ENCODE measurements at regions of chr12 and their contacts with region 1.

Region 1: GRCh38 chr12:110280779-110281548 is at the start of gene ATP2A2:
- DNase-seq: peak; percentile 75 to 97 (median 90)
- ATAC-seq: peak; percentile 89
- H3K4me3 ChIP-seq: peak within 1 kb of the TSS; percentile 60 to 82
- H3K4me3 Mint-ChIP-seq: peak within 1 kb of the TSS; percentile 91
- H3K27ac ChIP-seq: peak within 1 kb of the TSS; percentile 70 to 77
- H3K27ac Mint-ChIP-seq: peak within 1 kb of the TSS; percentile 94
- H3K4me1 ChIP-seq: peaks cover 35% of the 10 kb centered on the region
- H3K4me1 Mint-ChIP-seq: peaks cover 46% of the 10 kb centered on the region
- H3K27me3 ChIP-seq: no peaks in the 10 kb centered on the region
- H3K27me3 Mint-ChIP-seq: no peaks in the 10 kb centered on the region
- CTCF ChIP-seq: no peak
- total RNA-seq, gene ATP2A2: 100 to 105 TPM

Region 2: GRCh38 chr12:109573029-109573913 is 707.7 kb before region 1 on chr12 and contains the starts of genes MMAB and MVK:
- CTCF ChIA-PET with region 1: no interaction called
- POLR2A ChIA-PET with region 1: no interaction called
- intact Hi-C with region 1: loop called (anchors 2 to 5 kb)
- DNase-seq: peak; percentile 96 to 99 (median 98)
- ATAC-seq: peak; percentile 92
- H3K4me3 ChIP-seq: peak within 1 kb of the TSS; percentile 73 to 82
- H3K4me3 Mint-ChIP-seq: peak within 1 kb of the TSS; percentile 95
- H3K27ac ChIP-seq: peak within 1 kb of the TSS; percentile 95
- H3K27ac Mint-ChIP-seq: peak within 1 kb of the TSS; percentile 96
- H3K4me1 ChIP-seq: peaks cover 16% of the 10 kb centered on the region
- H3K4me1 Mint-ChIP-seq: peaks cover 35% of the 10 kb centered on the region
- H3K27me3 ChIP-seq: no peaks in the 10 kb centered on the region
- H3K27me3 Mint-ChIP-seq: no peaks in the 10 kb centered on the region
- CTCF ChIP-seq: no peak
- total RNA-seq, gene MMAB: 10.2 to 11.7 TPM
- total RNA-seq, gene MVK: 11.5 to 13.9 TPM

Region 3: GRCh38 chr12:110124184-110124995 is 156.6 kb before region 1 on chr12 and contains the start of gene IFT81:
- CTCF ChIA-PET with region 1: no interaction called
- POLR2A ChIA-PET with region 1: interaction called, 8 read pairs
- intact Hi-C with region 1: loop called (anchors 1 kb)
- DNase-seq: peak; percentile 94 to 99 (median 96)
- ATAC-seq: peak; percentile 95
- H3K4me3 ChIP-seq: peak within 1 kb of the TSS; percentile 69 to 96
- H3K4me3 Mint-ChIP-seq: peak within 1 kb of the TSS; percentile 91
- H3K27ac ChIP-seq: peak within 1 kb of the TSS; percentile 60 to 73
- H3K27ac Mint-ChIP-seq: peak within 1 kb of the TSS; percentile 83
- H3K4me1 ChIP-seq: peaks cover 10% of the 10 kb centered on the region
- H3K4me1 Mint-ChIP-seq: peaks cover 8% of the 10 kb centered on the region
- H3K27me3 ChIP-seq: no peaks in the 10 kb centered on the region
- H3K27me3 Mint-ChIP-seq: peaks cover 3% of the 10 kb centered on the region
- CTCF ChIP-seq: no peak
- total RNA-seq, gene IFT81: 0.25 to 0.43 TPM

Region 4: DNA sequence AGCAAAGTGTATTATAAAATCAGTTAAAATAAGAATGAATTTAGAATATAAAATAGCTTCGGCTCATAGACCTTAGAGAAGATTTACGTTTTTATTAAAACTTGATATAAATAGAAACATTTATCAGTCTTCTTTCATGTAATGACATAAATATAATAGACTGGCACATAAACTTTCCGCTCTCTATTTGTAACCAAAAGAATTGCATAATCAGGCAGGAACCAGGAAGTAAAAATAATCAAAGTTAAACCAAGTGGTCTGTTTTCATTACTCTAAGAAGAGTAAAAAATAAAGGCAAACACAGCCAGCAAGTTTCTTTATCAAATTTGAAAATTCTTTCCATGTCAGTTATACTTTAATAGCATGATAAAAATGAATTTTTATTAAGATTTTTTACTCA is 46.2 kb before region 1 on chr12:
- CTCF ChIA-PET with region 1: no interaction called
- POLR2A ChIA-PET with region 1: no interaction called
- intact Hi-C with region 1: no loop called
- DNase-seq: no peak
- ATAC-seq: no peak
- H3K4me3 ChIP-seq: no peak overlapping the region
- H3K4me3 Mint-ChIP-seq: no peak overlapping the region
- H3K27ac ChIP-seq: no peak overlapping the region
- H3K27ac Mint-ChIP-seq: no peak overlapping the region
- H3K4me1 ChIP-seq: no peaks in the 10 kb centered on the region
- H3K4me1 Mint-ChIP-seq: no peaks in the 10 kb centered on the region
- H3K27me3 ChIP-seq: no peaks in the 10 kb centered on the region
- H3K27me3 Mint-ChIP-seq: peaks cover 3% of the 10 kb centered on the region
- CTCF ChIP-seq: no peak

Region 5: DNA sequence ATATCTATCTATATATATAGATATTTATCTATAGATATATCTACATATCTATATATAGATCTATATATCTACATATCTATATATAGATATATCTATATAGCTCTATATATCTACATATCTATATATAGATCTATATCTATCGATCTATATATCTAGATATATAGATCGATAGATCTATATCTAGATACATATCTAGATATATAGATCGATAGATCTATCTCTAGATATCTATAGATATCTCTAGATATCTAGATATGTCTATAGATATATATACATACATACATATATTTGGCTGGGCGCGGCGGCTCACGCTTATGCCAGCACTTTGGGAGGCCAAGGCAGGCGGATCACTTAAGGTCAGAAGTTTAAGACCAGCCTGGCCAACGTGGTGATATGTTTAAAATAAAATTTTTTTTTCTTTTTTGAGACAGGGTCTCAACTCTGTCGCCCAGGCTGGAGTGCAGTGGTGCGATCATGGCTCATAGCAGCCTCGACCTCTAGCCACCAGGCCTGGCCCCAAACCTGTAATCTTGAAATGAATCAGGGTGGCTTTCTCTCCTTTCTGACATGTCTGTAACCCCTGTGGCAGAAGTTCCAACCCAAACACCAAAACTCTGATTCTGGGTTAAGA is 151.1 kb after region 1 on chr12:
- CTCF ChIA-PET with region 1: interaction called, 7 read pairs
- POLR2A ChIA-PET with region 1: no interaction called
- intact Hi-C with region 1: loop called (anchors 10 kb)
- DNase-seq: no peak
- ATAC-seq: no peak
- H3K4me3 ChIP-seq: peak overlapping the region in 1 of 2 experiments; percentile 50
- H3K4me3 Mint-ChIP-seq: no peak overlapping the region
- H3K27ac ChIP-seq: no peak overlapping the region
- H3K27ac Mint-ChIP-seq: no peak overlapping the region
- H3K4me1 ChIP-seq: no peaks in the 10 kb centered on the region
- H3K4me1 Mint-ChIP-seq: peaks cover 2% of the 10 kb centered on the region
- H3K27me3 ChIP-seq: no peaks in the 10 kb centered on the region
- H3K27me3 Mint-ChIP-seq: no peaks in the 10 kb centered on the region
- CTCF ChIP-seq: no peak

Region 6: DNA sequence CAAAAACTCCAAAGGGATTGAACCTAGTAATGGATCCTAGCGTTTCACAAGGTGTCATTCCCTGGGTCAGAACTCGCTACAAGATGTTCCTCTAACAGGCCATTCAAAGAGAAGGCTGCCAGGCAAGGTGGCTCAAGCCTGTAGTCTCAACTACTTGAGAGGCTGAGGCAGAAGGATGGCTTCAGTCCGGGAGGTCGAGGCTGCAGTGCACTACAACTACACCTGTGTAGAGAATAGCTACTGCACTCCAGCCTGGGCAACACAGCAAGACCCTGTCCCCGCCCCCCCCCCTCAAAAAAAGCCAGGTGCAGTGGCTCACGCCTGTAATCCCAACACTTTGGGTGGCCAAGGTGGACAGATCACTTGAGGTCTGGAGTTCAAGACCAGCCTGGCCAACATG is 287.8 kb after region 1 on chr12:
- CTCF ChIA-PET with region 1: no interaction called
- POLR2A ChIA-PET with region 1: no interaction called
- intact Hi-C with region 1: no loop called
- DNase-seq: no peak
- ATAC-seq: no peak
- H3K4me3 ChIP-seq: no peak overlapping the region
- H3K4me3 Mint-ChIP-seq: no peak overlapping the region
- H3K27ac ChIP-seq: no peak overlapping the region
- H3K27ac Mint-ChIP-seq: no peak overlapping the region
- H3K4me1 ChIP-seq: peaks cover 23% of the 10 kb centered on the region
- H3K4me1 Mint-ChIP-seq: peaks cover 53% of the 10 kb centered on the region
- H3K27me3 ChIP-seq: no peaks in the 10 kb centered on the region
- H3K27me3 Mint-ChIP-seq: no peaks in the 10 kb centered on the region
- CTCF ChIP-seq: no peak

Region 7: GRCh38 chr12:110613771-110614684 is 333.1 kb after region 1 on chr12 and contains the start of gene TCTN1:
- CTCF ChIA-PET with region 1: no interaction called
- POLR2A ChIA-PET with region 1: no interaction called
- intact Hi-C with region 1: loop called in 1 of 2 experiments (anchors 5 kb)
- DNase-seq: peak; percentile 90 to 97 (median 95)
- ATAC-seq: peak; percentile 100
- H3K4me3 ChIP-seq: peak within 1 kb of the TSS; percentile 75 to 76
- H3K4me3 Mint-ChIP-seq: peak within 1 kb of the TSS; percentile 88
- H3K27ac ChIP-seq: peak within 1 kb of the TSS; percentile 78 to 83
- H3K27ac Mint-ChIP-seq: peak within 1 kb of the TSS; percentile 85
- H3K4me1 ChIP-seq: peaks cover 5% of the 10 kb centered on the region
- H3K4me1 Mint-ChIP-seq: peaks cover 7% of the 10 kb centered on the region
- H3K27me3 ChIP-seq: no peaks in the 10 kb centered on the region
- H3K27me3 Mint-ChIP-seq: no peaks in the 10 kb centered on the region
- CTCF ChIP-seq: no peak
- total RNA-seq, gene TCTN1: 4.7 to 4.9 TPM